Aorta (tissue), 5 donors: ENCODE measurements at regions of chr1 and their contacts with region 1.

Region 1: DNA sequence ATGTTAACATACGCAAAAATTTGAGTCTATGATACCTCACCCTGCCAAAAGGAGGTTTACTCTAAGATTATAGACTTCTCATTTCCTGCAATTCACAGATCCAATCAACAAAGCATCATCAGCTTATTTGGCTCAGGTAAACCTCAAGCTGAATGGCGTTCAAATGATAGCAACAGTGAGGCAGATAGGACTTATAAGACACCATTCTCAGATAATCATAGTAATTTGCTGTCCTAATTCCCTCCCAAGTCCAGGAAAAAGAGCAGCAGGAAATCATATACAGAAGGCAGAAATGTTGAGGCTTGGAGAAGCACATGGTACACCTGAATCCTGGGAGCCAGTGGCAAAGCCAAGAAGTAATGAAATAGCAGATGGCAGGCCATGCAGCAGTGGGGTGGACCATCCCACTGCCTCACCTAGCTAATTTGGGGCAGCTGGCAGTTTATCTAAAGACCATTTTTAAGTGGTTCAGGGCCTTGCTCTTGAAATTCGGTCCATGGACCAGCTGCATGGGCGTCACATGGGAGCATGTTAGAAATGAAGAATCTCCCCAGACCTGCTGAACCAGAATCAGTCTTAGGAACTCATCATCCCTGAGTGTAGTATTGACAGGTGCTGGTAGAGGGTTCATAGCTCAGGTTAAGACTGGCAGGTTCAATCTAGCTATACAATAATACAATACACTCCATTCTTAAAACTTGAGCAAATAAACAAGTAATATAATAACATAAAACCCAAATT is 57.7 kb downstream of the ASTN1 start:
- DNase-seq: no peak
- ATAC-seq: no peak
- H3K4me3 ChIP-seq: no peak overlapping the region
- H3K27ac ChIP-seq: no peak overlapping the region
- H3K4me1 ChIP-seq: no peaks in the 10 kb centered on the region
- H3K27me3 ChIP-seq: peaks cover 0 to 2% of the 10 kb centered on the region in 2 donors

Region 2: DNA sequence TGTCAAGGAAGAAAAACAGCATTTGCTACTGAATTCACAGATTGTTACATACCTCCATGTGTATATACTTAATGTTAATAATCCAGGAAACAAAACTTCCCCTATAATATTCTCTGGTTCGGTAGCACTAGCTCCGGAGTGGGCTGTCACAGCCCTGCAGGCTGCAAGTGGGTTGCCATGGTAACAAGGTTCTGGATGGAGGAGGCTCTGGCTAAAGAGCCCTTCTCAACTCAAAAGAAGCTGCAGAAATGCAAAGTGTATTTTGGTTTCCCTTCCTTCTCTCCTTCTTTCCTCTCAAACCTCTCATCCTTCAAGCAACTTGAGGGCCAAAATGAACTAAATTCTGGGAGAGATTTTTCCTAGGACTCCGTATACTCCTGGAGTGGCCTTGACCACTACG is 12.5 kb after region 1 on chr1:
- intact Hi-C with region 1: loop called in 1 of 2 experiments (anchors 2 kb)
- DNase-seq: no peak
- ATAC-seq: no peak
- H3K4me3 ChIP-seq: no peak overlapping the region
- H3K27ac ChIP-seq: no peak overlapping the region
- H3K4me1 ChIP-seq: no peaks in the 10 kb centered on the region
- H3K27me3 ChIP-seq: peaks cover 0 to 1% of the 10 kb centered on the region in 2 donors